ENCODE measurements at regions of chr6 and their contacts with region 1.

Region 1: GRCh38 chr6:124870611-124871459 is 91.4 kb upstream of the RNF217 start:
- DNase-seq: peak in 1 of 3 donors; percentile 21
- H3K4me3 ChIP-seq: no peak overlapping the region
- H3K4me3 Mint-ChIP-seq: no peak overlapping the region
- H3K27ac ChIP-seq: no peak overlapping the region
- H3K27ac Mint-ChIP-seq: no peak overlapping the region
- H3K4me1 ChIP-seq: no peaks in the 10 kb centered on the region
- H3K4me1 Mint-ChIP-seq: no peaks in the 10 kb centered on the region
- H3K27me3 ChIP-seq: no peaks in the 10 kb centered on the region
- H3K27me3 Mint-ChIP-seq: peaks cover 0 to 4% (median 2%) of the 10 kb centered on the region in 3 donors
- CTCF ChIP-seq: peak; percentile 79

Region 2: GRCh38 chr6:124633660-124634059 is 237.2 kb before region 1 on chr6:
- intact Hi-C with region 1: no loop called
- DNase-seq: no peak
- H3K4me3 ChIP-seq: no peak overlapping the region
- H3K4me3 Mint-ChIP-seq: no peak overlapping the region
- H3K27ac ChIP-seq: no peak overlapping the region
- H3K27ac Mint-ChIP-seq: no peak overlapping the region
- H3K4me1 ChIP-seq: no peaks in the 10 kb centered on the region
- H3K4me1 Mint-ChIP-seq: no peaks in the 10 kb centered on the region
- H3K27me3 ChIP-seq: no peaks in the 10 kb centered on the region
- H3K27me3 Mint-ChIP-seq: peaks cover 0 to 1% (median 0%) of the 10 kb centered on the region in 3 donors
- CTCF ChIP-seq: no peak

Region 3: DNA sequence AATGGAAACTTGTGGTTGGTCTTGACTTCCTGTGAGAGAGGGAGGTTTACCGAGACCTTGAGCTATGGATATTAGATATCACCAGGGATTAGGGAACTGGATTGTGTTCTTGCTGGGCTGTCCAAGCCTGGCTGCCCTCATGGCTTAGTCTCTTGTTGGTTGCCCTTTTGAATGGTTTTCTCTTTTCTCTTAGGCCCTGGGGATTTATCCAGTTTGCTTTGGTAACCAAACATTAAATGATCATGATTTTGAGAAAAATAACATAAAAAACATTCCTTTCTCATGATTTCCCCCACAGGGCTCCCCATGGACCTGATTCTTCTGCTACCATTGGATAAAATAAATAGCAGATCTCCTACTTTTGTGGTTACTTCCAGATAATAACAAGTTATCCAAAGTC is 215.0 kb before region 1 on chr6:
- intact Hi-C with region 1: no loop called
- DNase-seq: no peak
- H3K4me3 ChIP-seq: no peak overlapping the region
- H3K4me3 Mint-ChIP-seq: no peak overlapping the region
- H3K27ac ChIP-seq: no peak overlapping the region
- H3K27ac Mint-ChIP-seq: no peak overlapping the region
- H3K4me1 ChIP-seq: no peaks in the 10 kb centered on the region
- H3K4me1 Mint-ChIP-seq: no peaks in the 10 kb centered on the region
- H3K27me3 ChIP-seq: no peaks in the 10 kb centered on the region
- H3K27me3 Mint-ChIP-seq: no peaks in the 10 kb centered on the region
- CTCF ChIP-seq: no peak

Region 4: GRCh38 chr6:125114248-125114858 is 243.5 kb after region 1 on chr6:
- intact Hi-C with region 1: loop called in 1 of 2 experiments (anchors 5 kb)
- DNase-seq: peak; percentile 9 to 53 (median 34)
- H3K4me3 ChIP-seq: no peak overlapping the region
- H3K4me3 Mint-ChIP-seq: no peak overlapping the region
- H3K27ac ChIP-seq: no peak overlapping the region
- H3K27ac Mint-ChIP-seq: no peak overlapping the region
- H3K4me1 ChIP-seq: no peaks in the 10 kb centered on the region
- H3K4me1 Mint-ChIP-seq: no peaks in the 10 kb centered on the region
- H3K27me3 ChIP-seq: no peaks in the 10 kb centered on the region
- H3K27me3 Mint-ChIP-seq: peaks cover 0 to 1% (median 0%) of the 10 kb centered on the region in 3 donors
- CTCF ChIP-seq: peak; percentile 84